WTC11 (cell line): ENCODE measurements at regions of chr12 and their contacts with region 1.

Region 1: DNA sequence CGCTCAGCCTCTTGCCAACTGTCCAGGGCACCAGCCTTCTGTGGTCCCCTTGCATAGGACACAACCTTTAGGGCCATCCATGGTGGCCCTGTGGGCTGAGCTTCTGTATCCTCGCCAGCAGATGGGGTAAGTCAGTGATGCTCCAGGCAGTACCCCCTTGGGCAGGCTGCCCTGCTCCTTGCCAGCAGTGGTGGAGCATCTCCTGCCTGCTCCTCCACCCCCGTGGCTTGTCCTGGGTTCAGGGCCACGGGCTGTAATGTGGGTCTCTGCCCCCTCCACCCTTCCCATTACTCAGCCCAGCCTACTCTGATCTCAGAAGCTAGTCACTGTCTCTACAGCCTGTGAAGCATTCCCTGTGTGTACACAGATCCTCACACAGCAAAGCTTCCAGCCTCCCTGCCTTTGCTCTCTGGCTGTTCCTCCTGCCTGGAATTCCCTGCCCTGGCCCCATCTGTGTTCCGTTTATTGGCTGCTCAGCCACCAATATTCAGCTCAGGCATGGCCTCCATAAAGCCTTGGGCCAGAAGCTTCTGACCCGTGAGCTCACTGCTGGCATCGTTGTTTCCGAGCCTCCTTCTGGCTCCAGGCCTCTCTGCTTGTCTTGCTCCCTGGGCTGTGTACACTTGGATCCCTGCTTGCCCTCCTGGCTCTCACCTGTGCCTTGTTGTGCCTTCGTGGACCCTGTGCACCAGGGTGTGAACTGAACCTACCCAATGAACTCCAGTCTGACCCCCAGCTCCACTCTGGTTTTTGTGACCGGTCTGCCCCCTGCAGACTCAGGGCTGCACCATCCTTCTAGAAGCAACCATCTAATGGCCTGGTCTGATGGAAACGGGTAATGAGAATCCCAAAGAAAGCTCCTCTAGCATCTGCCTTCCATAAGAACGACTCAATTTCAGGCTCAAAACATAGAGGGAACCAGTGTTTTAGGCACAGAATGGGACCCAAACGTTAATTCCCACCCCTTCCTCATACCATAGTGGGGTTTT is 177.0 kb upstream of the PRMT8 start:
- DNase-seq: peak; percentile 62
- ATAC-seq: peak; percentile 90
- H3K4me3 Mint-ChIP-seq: no peak overlapping the region
- H3K27ac Mint-ChIP-seq: no peak overlapping the region
- H3K4me1 Mint-ChIP-seq: peaks cover 8% of the 10 kb centered on the region
- H3K27me3 Mint-ChIP-seq: no peaks in the 10 kb centered on the region
- CTCF ChIP-seq: peak; percentile 22; the same call in 1 of the 2 replicates

Region 2: GRCh38 chr12:3236345-3237187 is 77.4 kb before region 1 on chr12:
- CTCF ChIA-PET with region 1: no interaction called
- POLR2A ChIA-PET with region 1: no interaction called
- DNase-seq: peak; percentile 52
- ATAC-seq: peak; percentile 94
- H3K4me3 Mint-ChIP-seq: no peak overlapping the region
- H3K27ac Mint-ChIP-seq: no peak overlapping the region
- H3K4me1 Mint-ChIP-seq: peaks cover 41% of the 10 kb centered on the region
- H3K27me3 Mint-ChIP-seq: no peaks in the 10 kb centered on the region
- CTCF ChIP-seq: no peak

Region 3: DNA sequence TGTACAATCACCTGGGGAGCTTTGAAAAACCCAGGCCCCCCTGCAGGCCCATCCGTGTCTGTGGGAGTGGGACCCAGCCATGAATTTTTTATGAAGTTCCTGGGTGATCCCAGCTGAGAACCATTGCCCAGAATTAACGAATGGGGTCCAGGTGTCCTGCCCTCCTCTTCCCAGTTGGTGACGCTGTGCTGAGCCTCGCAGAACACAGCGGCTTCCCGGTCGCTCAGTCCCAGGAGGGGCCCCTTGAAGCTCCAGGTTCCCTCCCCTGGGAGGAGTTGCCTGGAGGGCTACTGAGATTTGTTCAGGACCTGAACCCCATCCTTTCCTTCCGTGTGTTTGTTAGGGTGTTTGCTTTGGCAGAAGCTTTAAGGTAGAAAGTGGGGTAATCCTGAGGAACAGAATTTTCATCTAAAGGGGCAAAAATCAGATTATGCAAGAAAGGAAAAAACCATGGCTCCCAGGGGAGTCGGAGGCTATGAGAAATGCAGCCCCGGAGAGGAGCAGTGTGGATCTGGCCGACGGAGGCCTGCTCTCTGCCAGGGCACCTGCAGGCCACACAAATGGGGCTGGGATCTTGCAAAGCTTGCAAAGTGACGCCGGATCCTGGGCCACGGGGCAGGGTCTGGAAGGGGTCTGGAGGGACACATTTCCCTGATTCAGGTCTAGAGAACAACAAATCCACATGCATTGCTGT is 12.3 kb after region 1 on chr12:
- CTCF ChIA-PET with region 1: interaction called, 49 read pairs
- POLR2A ChIA-PET with region 1: no interaction called
- DNase-seq: peak; percentile 60
- ATAC-seq: peak; percentile 94
- H3K4me3 Mint-ChIP-seq: no peak overlapping the region
- H3K27ac Mint-ChIP-seq: no peak overlapping the region
- H3K4me1 Mint-ChIP-seq: peaks cover 25% of the 10 kb centered on the region
- H3K27me3 Mint-ChIP-seq: no peaks in the 10 kb centered on the region; the same call in 1 of the 2 replicates
- CTCF ChIP-seq: 0 out of 2 replicates have a peak, but pooled peaks have one; percentile 11

Region 4: GRCh38 chr12:3336606-3337311 is 22.8 kb after region 1 on chr12:
- CTCF ChIA-PET with region 1: interaction called, 36 read pairs
- POLR2A ChIA-PET with region 1: no interaction called
- DNase-seq: no peak
- ATAC-seq: peak; percentile 27; the same call in 1 of the 2 replicates
- H3K4me3 Mint-ChIP-seq: no peak overlapping the region
- H3K27ac Mint-ChIP-seq: no peak overlapping the region
- H3K4me1 Mint-ChIP-seq: peaks cover 22% of the 10 kb centered on the region
- H3K27me3 Mint-ChIP-seq: no peaks in the 10 kb centered on the region; the same call in 1 of the 2 replicates
- CTCF ChIP-seq: no peak

Region 5: DNA sequence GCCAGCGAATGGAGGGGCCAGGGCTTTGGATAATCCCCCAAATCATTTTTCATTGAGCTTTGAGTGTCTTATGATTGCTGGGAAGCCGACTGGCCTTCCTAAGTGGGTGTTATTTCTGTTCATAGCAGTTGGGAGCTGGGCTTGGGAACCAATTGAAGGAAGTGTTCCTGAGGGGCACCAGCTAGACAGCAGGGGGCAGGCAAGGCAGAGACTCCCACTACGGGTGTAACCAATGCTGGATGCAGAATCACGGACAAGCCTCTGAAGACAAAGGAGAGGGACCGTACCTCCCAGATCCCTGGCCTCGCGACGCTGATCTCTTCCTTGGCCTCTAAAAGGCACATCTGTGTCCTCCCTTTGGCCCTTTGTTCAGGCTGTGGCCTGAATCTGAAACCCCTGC is 28.1 kb after region 1 on chr12:
- CTCF ChIA-PET with region 1: interaction called, 11 read pairs
- POLR2A ChIA-PET with region 1: no interaction called
- DNase-seq: peak; percentile 61
- ATAC-seq: peak; percentile 89
- H3K4me3 Mint-ChIP-seq: no peak overlapping the region
- H3K27ac Mint-ChIP-seq: no peak overlapping the region
- H3K4me1 Mint-ChIP-seq: peaks cover 20% of the 10 kb centered on the region
- H3K27me3 Mint-ChIP-seq: no peaks in the 10 kb centered on the region
- CTCF ChIP-seq: no peak

Region 6: GRCh38 chr12:3473844-3474243 is 159.9 kb after region 1 on chr12:
- CTCF ChIA-PET with region 1: no interaction called
- POLR2A ChIA-PET with region 1: no interaction called
- DNase-seq: no peak
- ATAC-seq: peak; percentile 71
- H3K4me3 Mint-ChIP-seq: no peak overlapping the region
- H3K27ac Mint-ChIP-seq: no peak overlapping the region
- H3K4me1 Mint-ChIP-seq: peaks cover 21% of the 10 kb centered on the region
- H3K27me3 Mint-ChIP-seq: peaks cover 14% of the 10 kb centered on the region
- CTCF ChIP-seq: no peak

Region 7: GRCh38 chr12:3491938-3492792 is 178.2 kb after region 1 on chr12:
- CTCF ChIA-PET with region 1: interaction called, 16 read pairs
- POLR2A ChIA-PET with region 1: interaction called, 3 read pairs
- DNase-seq: peak; percentile 84
- ATAC-seq: peak; percentile 77
- H3K4me3 Mint-ChIP-seq: peak overlapping the region; percentile 68
- H3K27ac Mint-ChIP-seq: no peak overlapping the region
- H3K4me1 Mint-ChIP-seq: peaks cover 49% of the 10 kb centered on the region
- H3K27me3 Mint-ChIP-seq: peaks cover 88% of the 10 kb centered on the region
- CTCF ChIP-seq: no peak

Region 8: DNA sequence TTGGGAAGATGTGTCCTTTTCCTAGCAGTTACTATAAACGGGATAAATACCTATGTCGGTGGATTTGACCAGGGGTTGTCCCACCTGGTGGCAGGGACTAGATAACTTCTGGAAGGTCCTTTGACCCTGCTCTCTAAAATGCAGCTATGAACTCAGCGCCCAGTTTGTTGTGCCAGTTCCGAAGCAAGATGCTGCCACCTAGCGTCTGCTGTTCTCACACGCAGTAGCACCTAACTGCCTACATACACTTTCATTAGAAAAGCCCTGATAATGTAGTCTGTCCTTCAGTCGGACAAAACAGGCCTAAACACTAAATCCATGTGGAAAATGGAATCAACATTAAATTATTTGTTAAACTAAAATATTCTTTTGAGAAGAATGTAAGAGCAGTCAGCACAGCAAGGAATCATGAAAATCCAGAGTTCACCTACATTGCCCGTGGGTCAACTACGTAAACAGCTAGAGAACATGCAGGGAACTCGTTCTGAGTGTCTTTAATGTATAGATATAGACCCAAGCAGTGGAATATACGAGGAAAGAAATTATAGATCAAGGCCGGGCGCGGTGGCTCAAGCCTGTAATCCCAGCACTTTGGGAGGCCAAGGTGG is 490.0 kb after region 1 on chr12:
- CTCF ChIA-PET with region 1: interaction called, 23 read pairs
- POLR2A ChIA-PET with region 1: no interaction called
- DNase-seq: peak; percentile 80
- ATAC-seq: peak; percentile 92
- H3K4me3 Mint-ChIP-seq: no peak overlapping the region
- H3K27ac Mint-ChIP-seq: no peak overlapping the region
- H3K4me1 Mint-ChIP-seq: no peaks in the 10 kb centered on the region
- H3K27me3 Mint-ChIP-seq: no peaks in the 10 kb centered on the region
- CTCF ChIP-seq: peak; percentile 51